MCF 10A (cell line): ENCODE measurements at regions of chr12 and their contacts with region 1.

Region 1: DNA sequence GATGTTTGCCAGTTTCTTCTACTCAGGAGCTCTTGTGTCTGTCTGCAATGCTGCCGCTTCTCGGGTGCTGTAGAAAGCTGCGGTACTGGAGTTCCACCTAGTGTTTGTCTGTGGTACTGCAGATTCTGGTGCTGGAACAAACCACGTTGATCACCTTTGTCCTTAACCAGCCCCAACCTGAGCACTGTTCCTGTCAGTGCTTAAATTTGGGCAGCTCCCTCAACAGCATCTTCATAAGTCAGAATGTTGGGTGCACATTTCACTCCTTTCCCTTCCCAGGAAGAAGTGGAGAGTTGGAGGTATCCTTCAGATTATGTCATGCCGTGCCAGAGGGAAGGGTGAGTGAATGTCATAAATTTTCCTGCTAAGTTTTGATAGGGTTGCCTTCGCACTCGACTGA is 48.7 kb upstream of the LALBA start:
- DNase-seq: peak; percentile 79
- H3K4me3 Mint-ChIP-seq: no peak overlapping the region
- H3K27ac Mint-ChIP-seq: no peak overlapping the region
- H3K4me1 Mint-ChIP-seq: no peaks in the 10 kb centered on the region
- H3K27me3 Mint-ChIP-seq: peaks cover 61% of the 10 kb centered on the region
- CTCF ChIP-seq: peak; percentile 91

Region 2: GRCh38 chr12:48165094-48165981 is 453.2 kb before region 1 on chr12:
- CTCF ChIA-PET with region 1: interaction called, 12 read pairs
- POLR2A ChIA-PET with region 1: no interaction called
- intact Hi-C with region 1: no loop called
- DNase-seq: peak; percentile 72
- H3K4me3 Mint-ChIP-seq: no peak overlapping the region
- H3K27ac Mint-ChIP-seq: no peak overlapping the region
- H3K4me1 Mint-ChIP-seq: no peaks in the 10 kb centered on the region
- H3K27me3 Mint-ChIP-seq: peaks cover 11% of the 10 kb centered on the region
- CTCF ChIP-seq: peak; percentile 87

Region 3: GRCh38 chr12:48197971-48198671 is 420.4 kb before region 1 on chr12:
- CTCF ChIA-PET with region 1: interaction called, 13 read pairs
- POLR2A ChIA-PET with region 1: no interaction called
- intact Hi-C with region 1: loop called (anchors 5 kb)
- DNase-seq: no peak
- H3K4me3 Mint-ChIP-seq: peak overlapping the region; percentile 77
- H3K27ac Mint-ChIP-seq: no peak overlapping the region
- H3K4me1 Mint-ChIP-seq: peaks cover 7% of the 10 kb centered on the region
- H3K27me3 Mint-ChIP-seq: peaks cover 56% of the 10 kb centered on the region
- CTCF ChIP-seq: peak; percentile 0

Region 4: DNA sequence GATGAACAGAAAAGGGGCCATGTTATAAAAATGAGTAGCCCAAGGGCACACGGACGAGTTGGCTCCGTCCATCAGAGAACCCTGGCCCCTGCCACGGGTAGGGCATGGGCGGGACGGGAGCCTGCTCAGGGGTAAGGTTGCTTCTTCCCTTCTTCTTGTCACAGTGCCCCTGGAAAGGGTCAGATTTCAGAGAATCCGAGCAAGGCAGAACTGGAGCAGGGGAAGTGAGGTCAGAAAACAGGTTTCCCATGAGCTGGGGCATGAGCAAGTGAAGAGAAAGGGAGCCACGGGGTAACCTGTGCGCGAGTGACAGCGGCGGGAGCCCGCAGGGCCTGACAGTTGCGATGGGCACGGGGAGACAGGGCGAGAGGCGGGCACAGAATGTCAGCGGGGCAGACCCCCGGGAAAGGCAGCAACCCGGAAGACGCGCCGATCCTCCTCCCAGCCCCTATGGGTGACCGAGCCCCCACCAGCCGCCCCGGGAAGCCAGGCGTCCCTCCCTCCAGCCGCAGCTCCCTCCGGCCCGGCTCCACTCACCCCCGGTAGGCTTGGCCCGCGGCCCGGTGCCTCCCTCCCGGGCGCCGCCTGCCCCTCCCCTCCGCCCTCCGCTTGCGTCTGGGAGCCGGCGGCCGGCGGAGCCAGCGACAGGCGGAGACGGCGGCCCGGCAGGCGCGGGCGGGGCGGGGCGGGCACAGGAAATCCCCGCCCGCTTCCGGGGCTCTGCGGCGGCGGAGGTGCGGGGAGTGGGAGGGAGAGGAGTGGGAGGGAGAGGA is 268.1 kb before region 1 on chr12 and contains the start of gene ZNF641:
- CTCF ChIA-PET with region 1: interaction called, 3 read pairs
- POLR2A ChIA-PET with region 1: no interaction called
- intact Hi-C with region 1: loop called (anchors 10 kb)
- DNase-seq: peak; percentile 74
- H3K4me3 Mint-ChIP-seq: peak within 1 kb of the TSS; percentile 90
- H3K27ac Mint-ChIP-seq: peak within 1 kb of the TSS; percentile 67
- H3K4me1 Mint-ChIP-seq: peaks cover 6% of the 10 kb centered on the region
- H3K27me3 Mint-ChIP-seq: no peaks in the 10 kb centered on the region
- CTCF ChIP-seq: no peak
- total RNA-seq, gene ZNF641: 10.0 and 12.0 TPM in 2 replicates

Region 5: DNA sequence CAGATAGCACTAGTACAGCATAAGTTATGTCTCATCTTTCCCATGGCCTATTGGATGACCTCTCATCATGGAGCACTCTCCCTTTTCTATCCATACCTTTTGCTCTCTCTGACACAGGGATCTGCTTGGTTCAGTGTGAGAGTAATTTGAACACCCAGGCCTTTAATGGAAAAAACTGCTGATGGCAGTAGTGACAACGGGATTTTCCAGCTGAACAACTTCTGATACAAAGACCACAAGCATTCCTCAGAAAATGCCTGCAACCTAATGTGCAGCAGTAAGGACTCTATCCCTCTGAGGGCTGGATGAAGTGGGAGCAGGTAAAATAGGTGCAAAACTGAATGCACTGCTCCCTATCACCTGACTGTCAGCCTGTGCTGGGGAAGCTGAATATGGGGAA is 12.5 kb after region 1 on chr12:
- CTCF ChIA-PET with region 1: interaction called, 17 read pairs
- POLR2A ChIA-PET with region 1: interaction called, 3 read pairs
- intact Hi-C with region 1: no loop called
- DNase-seq: no peak
- H3K4me3 Mint-ChIP-seq: no peak overlapping the region
- H3K27ac Mint-ChIP-seq: no peak overlapping the region
- H3K4me1 Mint-ChIP-seq: no peaks in the 10 kb centered on the region
- H3K27me3 Mint-ChIP-seq: peaks cover 50% of the 10 kb centered on the region
- CTCF ChIP-seq: no peak